ENCODE measurements at regions of chr12 and their contacts with region 1.

Region 1: GRCh38 chr12:3658327-3659163 is 94.4 kb downstream of the CRACR2A start:
- DNase-seq: peak; percentile 45

Region 2: DNA sequence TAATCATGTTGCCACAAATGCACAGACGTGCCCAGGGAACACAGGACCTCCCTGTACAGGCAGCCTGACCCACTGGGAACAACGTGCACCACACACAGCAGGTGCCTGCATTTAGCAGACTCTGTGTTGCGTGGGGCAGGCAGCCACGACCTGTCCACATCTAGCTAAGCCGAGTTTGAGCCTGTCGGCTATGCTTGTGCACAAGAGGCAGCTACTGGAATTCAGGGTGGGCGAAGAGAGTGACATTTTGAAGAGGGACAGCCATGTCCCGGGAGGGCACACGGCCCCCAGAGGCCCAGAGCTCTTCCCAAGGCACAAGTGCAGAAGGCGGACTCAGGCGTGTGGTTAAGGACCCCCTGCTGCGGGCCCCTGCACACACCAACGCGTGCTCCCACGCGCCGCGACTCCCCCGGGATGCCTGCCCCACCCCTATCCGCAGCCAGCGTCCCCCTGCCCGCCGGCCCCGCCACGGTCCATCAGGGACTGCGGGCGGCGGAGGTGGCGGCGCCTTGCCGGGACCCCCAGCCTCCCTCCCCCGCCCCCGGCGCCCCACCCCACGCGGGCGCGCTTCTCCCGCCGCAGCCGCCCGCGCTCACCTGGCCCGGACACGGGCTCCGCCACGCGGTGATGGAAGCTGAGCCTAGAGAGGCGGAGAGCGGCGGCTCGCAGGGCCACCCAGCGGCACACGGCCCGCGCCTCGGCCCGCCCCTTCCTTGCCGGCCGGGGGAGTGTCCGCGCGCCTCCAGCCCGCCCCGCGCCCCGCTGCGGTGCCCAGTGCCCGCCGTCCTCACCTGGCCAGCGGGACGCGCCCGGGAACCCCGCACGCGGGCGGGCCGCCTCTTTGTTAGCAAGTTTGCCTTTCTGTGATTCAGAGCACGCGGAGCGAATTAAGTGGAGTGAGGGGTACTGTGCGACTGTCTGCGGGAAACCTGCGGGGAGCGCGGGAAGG is 292.8 kb before region 1 on chr12:
- in situ Hi-C with region 1: loop called (anchors 25 kb)
- DNase-seq: peak; percentile 46